Thyroid gland (tissue), 4 donors: ENCODE measurements at regions of chr9 and their contacts with region 1.

Region 1: GRCh38 chr9:38017149-38017884 is 51.7 kb downstream of the SHB start:
- DNase-seq: peak; percentile 82 to 90
- H3K4me3 ChIP-seq: no peak overlapping the region
- H3K27ac ChIP-seq: peak overlapping the region; percentile 37 to 57 (median 57)
- H3K4me1 ChIP-seq: peaks cover 44 to 55% of the 10 kb centered on the region in 2 donors
- H3K27me3 ChIP-seq: no peaks in the 10 kb centered on the region
- CTCF ChIP-seq: peak in 5 of 6 experiments; percentile 45 to 87 (median 72)
- POLR2A ChIP-seq: no peak

Region 2: DNA sequence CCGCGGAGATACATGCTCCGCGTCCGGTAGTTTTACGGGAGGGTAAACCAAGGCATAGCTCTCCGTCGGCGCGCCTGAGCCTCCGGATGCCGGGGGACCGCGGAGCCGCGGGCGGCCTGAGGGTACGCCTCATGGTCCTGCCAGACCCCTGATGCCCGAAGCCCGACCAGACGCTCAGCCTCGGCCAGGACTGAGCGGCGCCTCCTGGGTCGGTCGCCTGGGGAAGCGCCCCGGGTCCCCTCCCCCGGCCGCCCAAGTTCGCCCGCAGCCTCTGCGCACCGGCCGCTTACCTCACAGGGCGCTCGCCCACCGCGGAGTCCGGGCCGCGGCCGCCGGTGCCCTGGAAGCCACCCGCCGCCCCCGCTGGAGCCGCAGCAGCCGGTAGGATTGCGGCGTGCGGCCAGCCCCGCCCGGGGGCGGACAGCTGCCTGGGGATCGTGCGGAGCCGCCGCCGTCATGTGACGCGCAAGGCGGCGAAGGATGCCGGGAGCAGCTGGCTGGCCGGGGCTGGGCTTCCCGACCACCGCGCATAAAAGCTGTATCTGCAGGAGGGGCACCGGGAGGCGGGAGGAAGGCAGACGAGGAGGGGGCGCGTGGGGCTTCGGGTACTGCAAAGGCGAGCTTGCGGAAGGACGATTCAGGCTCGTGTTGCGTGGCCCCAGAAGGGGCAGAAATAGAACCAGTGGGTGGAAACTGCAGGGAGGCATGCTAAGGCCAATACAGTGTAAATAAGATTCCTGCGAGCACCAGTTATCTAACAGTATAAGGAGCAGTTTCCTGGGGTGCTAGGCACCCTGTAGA is 441.2 kb before region 1 on chr9 and contains the start of gene FBXO10:
- intact Hi-C with region 1: no loop called
- DNase-seq: peak; percentile 72 to 74
- H3K4me3 ChIP-seq: peak within 1 kb of the TSS; percentile 54 to 67 (median 57)
- H3K27ac ChIP-seq: peak within 1 kb of the TSS in 2 of 3 donors; percentile 68 to 70
- H3K4me1 ChIP-seq: peaks cover 5 to 28% of the 10 kb centered on the region in 2 donors
- H3K27me3 ChIP-seq: no peaks in the 10 kb centered on the region
- CTCF ChIP-seq: peak in 1 of 6 experiments; percentile 4
- POLR2A ChIP-seq: peak in 1 of 2 donors; percentile 69
- total RNA-seq, gene FBXO10: 6.6 to 17.5 (median 12.2) TPM

Region 3: GRCh38 chr9:37943329-37944265 is 73.7 kb before region 1 on chr9:
- intact Hi-C with region 1: loop called (anchors 10 kb)
- DNase-seq: peak; percentile 48 to 73
- H3K4me3 ChIP-seq: no peak overlapping the region
- H3K27ac ChIP-seq: peak overlapping the region in 2 of 3 donors; percentile 43 to 48
- H3K4me1 ChIP-seq: peaks cover 16 to 21% of the 10 kb centered on the region in 2 donors
- H3K27me3 ChIP-seq: no peaks in the 10 kb centered on the region
- CTCF ChIP-seq: no peak
- POLR2A ChIP-seq: no peak